Cardiac septum (tissue), 1 donor: ENCODE measurements at regions of chr14 and their contacts with region 1.

Region 1: GRCh38 chr14:52046376-52046917 is 22.4 kb downstream of the NID2 start:
- DNase-seq: no peak

Region 2: DNA sequence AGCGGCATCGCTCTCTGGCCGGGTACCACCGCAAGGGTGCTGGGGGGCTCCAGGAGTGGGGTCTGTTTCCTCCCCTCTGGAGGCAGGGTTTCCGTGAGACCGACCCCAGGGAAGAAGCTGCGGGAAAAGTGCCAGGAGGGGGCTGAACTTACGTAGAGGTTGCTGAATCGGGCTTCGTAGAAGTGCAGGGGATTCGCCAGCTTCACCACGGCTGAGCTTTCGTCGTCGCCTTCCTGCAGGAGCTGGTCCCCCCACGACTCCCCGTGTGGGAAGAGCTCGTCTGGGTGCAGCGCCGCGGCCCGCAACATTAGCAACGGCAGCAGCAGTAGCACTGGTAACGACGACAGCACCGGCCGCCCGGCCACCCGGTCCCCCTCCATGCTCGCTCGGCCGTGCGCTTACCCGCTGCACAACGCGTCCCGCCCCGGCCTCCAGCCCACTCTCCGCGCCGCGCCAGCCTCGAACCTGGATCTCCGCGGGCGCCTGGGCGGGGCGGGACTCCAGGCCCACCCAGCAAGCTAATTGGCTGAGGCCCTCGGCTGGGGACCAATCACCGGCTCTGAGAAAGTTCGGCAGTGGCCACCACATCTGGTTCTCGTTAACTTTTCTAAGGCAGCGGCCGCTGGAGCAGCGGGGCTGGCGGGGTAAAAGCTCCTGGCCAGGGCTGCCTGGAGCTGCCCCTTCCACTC is 22.3 kb after region 1 on chr14 and contains the start of gene NID2:
- intact Hi-C with region 1: loop called (anchors 2 kb)
- DNase-seq: peak; percentile 93
- total RNA-seq, gene NID2: 37.3 TPM